ENCODE measurements at regions of chr2 and their contacts with region 1.

Region 1: GRCh38 chr2:14577843-14578242 is 54.7 kb upstream of the LRATD1 start:
- DNase-seq: no peak
- H3K27ac ChIP-seq: no peak overlapping the region
- CTCF ChIP-seq: no peak

Region 2: GRCh38 chr2:14524057-14524802 is 53.6 kb before region 1 on chr2:
- CTCF ChIA-PET with region 1: no interaction called
- POLR2A ChIA-PET with region 1: no interaction called
- DNase-seq: peak; percentile 70
- H3K27ac ChIP-seq: no peak overlapping the region
- CTCF ChIP-seq: no peak

Region 3: GRCh38 chr2:14628901-14629300 is 51.1 kb after region 1 on chr2:
- CTCF ChIA-PET with region 1: interaction called, 4 read pairs
- POLR2A ChIA-PET with region 1: interaction called, 14 read pairs
- DNase-seq: peak; percentile 71
- H3K27ac ChIP-seq: no peak overlapping the region; the same call in 1 of the 2 replicates
- CTCF ChIP-seq: no peak

Region 4: GRCh38 chr2:15120631-15121030 is 542.8 kb after region 1 on chr2:
- CTCF ChIA-PET with region 1: no interaction called
- POLR2A ChIA-PET with region 1: no interaction called
- DNase-seq: no peak
- H3K27ac ChIP-seq: no peak overlapping the region
- CTCF ChIP-seq: no peak

Measured in RWPE1 (cell line).